ENCODE measurements at regions of chr3 and their contacts with region 1.

Region 1: GRCh38 chr3:133487920-133488540 is 85.5 kb upstream of the CDV3 start:
- DNase-seq: peak; percentile 30
- CTCF ChIP-seq: no peak

Region 2: DNA sequence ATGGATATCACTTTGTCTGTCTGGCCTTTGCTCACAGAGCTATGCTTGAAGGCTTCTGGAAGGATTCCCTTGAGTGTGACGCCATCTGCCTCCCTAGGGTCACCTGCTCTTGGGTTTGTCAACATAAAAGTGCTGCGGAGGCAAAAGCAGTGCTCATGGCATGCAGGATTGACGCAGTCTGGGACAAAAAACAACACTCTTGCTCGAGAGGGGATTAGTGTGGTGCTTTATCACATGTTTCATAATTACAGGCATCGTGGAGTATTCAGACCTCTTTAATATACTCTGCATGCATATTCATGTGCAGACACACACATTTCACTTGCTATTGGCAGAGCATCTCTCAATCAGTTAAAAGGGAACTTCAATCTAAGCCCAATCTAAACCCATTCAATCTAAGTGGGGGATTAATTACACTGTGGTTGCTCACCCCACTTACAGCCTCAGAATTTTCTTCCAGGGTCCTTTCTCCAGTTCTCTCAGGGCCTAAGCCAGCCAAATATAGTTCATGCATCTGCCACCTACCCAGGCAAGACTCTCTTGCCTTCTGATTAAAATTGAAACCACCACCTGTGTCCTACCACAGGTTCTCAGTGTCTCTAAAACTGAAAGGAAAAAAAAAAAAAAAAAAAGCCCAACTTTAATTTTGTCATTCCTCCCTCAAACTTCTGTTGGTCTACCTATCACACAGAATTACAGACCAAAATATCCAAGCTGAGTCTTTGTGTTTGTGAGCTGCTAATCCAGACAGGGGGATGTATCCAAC is 12.6 kb before region 1 on chr3:
- CTCF ChIA-PET with region 1: interaction called, 170 read pairs
- POLR2A ChIA-PET with region 1: interaction called, 3 read pairs
- DNase-seq: peak; percentile 80
- CTCF ChIP-seq: peak; percentile 2

Region 3: GRCh38 chr3:133506215-133506901 is 18.3 kb after region 1 on chr3:
- CTCF ChIA-PET with region 1: interaction called, 10 read pairs
- POLR2A ChIA-PET with region 1: no interaction called
- DNase-seq: peak; percentile 70
- CTCF ChIP-seq: no peak

Region 4: DNA sequence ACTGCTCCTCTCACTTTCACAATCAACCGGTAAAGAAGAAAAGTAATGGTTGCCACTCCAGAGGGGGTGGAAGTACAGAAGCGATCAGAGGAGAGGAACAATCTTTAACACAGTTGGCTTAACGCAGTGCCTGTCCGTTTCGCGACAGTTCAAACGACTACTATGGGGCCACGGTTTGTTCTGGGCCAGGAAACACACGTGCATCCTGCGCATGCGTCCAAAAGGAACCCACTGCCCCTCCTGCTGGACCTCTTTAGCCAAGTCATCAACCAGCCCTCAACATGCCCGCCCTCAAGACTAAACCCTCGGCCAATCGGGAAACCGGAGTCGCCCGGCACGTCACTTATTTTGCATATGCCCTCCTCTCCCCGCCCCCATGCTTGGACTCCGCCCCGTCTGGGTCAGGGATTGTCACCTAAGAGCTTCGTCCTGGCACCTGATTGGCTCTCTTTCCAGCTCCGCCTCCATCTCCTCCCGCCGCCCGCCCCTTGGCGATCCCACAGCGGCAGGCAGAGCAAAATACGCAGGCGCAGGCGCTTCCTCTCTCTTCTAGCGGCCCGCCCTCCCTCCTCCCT is 85.1 kb after region 1 on chr3:
- CTCF ChIA-PET with region 1: interaction called, 13 read pairs
- POLR2A ChIA-PET with region 1: interaction called, 12 read pairs
- DNase-seq: peak; percentile 93
- CTCF ChIP-seq: peak; percentile 11

Region 5: GRCh38 chr3:133591271-133591742 is 103.3 kb after region 1 on chr3:
- CTCF ChIA-PET with region 1: no interaction called
- POLR2A ChIA-PET with region 1: no interaction called
- DNase-seq: no peak
- CTCF ChIP-seq: no peak